T-cell (primary cell): ENCODE measurements at regions of chr6 and their contacts with region 1.

Region 1: DNA sequence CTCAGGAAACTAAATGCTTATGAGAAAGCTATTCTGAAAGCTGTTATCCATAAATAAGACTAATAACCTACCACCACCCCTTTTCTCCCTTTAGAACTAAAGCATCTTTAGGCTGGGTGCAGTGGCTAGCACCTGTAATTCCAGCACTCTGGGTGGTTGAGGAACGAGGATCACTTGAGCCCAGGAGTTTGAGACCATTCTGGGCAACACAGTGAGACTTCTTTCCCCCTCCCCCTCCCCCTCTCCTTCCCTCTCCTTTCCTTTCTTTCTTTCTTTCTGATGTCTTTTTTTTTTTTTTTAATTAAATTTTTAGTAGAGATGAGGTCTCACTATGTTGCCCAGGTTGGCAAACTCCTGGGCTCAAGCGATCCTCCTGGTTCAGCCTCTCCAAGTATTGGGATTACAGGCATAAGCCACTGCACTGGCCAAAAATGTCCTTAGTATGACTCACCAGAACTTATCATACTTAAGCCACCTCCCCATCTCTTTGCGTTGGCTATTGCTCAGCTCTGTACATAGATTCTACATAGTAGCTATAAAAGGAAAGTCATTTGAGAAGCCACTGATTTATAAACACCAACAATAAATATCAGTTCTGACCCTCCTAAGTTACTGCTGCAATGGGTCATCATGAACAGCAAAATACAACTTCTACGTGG is 54.8 kb upstream of the SPDEF start:
- DNase-seq: no peak
- ATAC-seq: no peak
- H3K4me3 ChIP-seq: no peak overlapping the region
- H3K4me3 Mint-ChIP-seq: no peak overlapping the region
- H3K27ac ChIP-seq: no peak overlapping the region
- H3K27ac Mint-ChIP-seq: peak overlapping the region in 1 of 2 donors; percentile 18
- H3K4me1 ChIP-seq: no peaks in the 10 kb centered on the region
- H3K4me1 Mint-ChIP-seq: peaks cover 12 to 22% (median 15%) of the 10 kb centered on the region in 3 donors
- H3K27me3 ChIP-seq: no peaks in the 10 kb centered on the region
- H3K27me3 Mint-ChIP-seq: no peaks in the 10 kb centered on the region

Region 2: DNA sequence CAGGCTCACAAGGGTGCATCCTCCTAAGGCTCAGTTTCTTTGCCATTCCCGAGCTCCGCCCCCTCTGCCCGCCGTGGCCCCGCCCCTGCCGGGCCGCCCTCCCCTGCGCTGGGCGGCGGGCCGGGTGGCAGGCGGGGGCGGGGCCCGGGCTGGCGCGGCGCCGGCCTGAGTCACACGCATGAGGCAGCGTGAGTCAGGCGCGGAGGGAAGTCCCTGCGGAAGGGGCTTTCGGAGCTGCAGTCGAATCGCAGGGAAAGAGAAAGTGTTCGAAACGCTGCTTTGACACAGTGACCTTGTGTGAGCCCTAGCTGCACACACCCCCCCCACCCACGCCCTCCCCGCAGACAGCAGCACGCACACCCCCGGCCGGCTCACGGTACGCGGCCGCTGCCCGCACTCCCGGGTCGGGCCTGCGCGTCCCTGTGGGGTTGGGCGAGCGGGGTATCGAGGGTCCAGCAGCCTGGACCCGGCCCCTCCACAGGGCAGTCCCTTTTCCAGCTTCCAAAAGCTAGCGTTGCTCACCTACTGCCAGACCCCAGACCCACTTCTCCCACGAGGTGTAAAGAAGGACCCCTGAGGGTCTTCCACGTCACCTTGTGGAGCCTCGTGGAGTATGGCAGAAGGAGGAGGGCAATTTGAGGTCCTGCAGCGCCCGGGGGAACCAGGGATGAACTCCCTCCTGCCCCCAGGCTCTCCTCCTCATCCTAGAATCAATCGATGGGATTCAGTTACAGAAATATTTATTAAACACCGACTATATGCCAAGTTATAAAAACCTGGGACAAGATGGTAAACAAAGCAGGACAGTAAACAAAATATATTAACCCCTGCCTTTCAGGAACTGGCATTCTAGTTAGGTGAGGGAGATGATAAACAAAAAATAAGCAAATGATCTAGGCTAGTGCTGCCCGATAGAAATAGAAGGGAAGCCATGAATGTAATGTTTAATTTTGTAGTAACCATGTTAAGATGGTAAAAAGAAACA is 386.7 kb before region 1 on chr6:
- CTCF ChIA-PET with region 1: no interaction called
- POLR2A ChIA-PET with region 1: no interaction called
- DNase-seq: peak; percentile 85 to 98 (median 92)
- ATAC-seq: peak; percentile 95 to 99 (median 99)
- H3K4me3 ChIP-seq: peak overlapping the region; percentile 61 to 69
- H3K4me3 Mint-ChIP-seq: peak overlapping the region; percentile 60 to 73 (median 64)
- H3K27ac ChIP-seq: peak overlapping the region; percentile 99
- H3K27ac Mint-ChIP-seq: peak overlapping the region; percentile 91
- H3K4me1 ChIP-seq: peaks cover 6 to 13% of the 10 kb centered on the region in 2 experiments
- H3K4me1 Mint-ChIP-seq: peaks cover 6 to 25% (median 17%) of the 10 kb centered on the region in 3 donors
- H3K27me3 ChIP-seq: no peaks in the 10 kb centered on the region
- H3K27me3 Mint-ChIP-seq: no peaks in the 10 kb centered on the region

Region 3: GRCh38 chr6:34248727-34249551 is 362.0 kb before region 1 on chr6 and contains the start of gene SMIM29:
- CTCF ChIA-PET with region 1: interaction called in 1 of 2 experiments, 10 read pairs
- POLR2A ChIA-PET with region 1: no interaction called
- DNase-seq: peak; percentile 92 to 99 (median 97)
- ATAC-seq: peak; percentile 89 to 95 (median 90)
- H3K4me3 ChIP-seq: peak within 1 kb of the TSS; percentile 87 to 90
- H3K4me3 Mint-ChIP-seq: peak within 1 kb of the TSS; percentile 85 to 95 (median 90)
- H3K27ac ChIP-seq: peak within 1 kb of the TSS; percentile 90
- H3K27ac Mint-ChIP-seq: peak within 1 kb of the TSS; percentile 94 to 95
- H3K4me1 ChIP-seq: peaks cover 8 to 41% of the 10 kb centered on the region in 2 experiments
- H3K4me1 Mint-ChIP-seq: peaks cover 27 to 49% (median 40%) of the 10 kb centered on the region in 3 donors
- H3K27me3 ChIP-seq: no peaks in the 10 kb centered on the region
- H3K27me3 Mint-ChIP-seq: no peaks in the 10 kb centered on the region
- total RNA-seq, gene SMIM29: 16.4 to 33.8 (median 30.5) TPM

Region 4: DNA sequence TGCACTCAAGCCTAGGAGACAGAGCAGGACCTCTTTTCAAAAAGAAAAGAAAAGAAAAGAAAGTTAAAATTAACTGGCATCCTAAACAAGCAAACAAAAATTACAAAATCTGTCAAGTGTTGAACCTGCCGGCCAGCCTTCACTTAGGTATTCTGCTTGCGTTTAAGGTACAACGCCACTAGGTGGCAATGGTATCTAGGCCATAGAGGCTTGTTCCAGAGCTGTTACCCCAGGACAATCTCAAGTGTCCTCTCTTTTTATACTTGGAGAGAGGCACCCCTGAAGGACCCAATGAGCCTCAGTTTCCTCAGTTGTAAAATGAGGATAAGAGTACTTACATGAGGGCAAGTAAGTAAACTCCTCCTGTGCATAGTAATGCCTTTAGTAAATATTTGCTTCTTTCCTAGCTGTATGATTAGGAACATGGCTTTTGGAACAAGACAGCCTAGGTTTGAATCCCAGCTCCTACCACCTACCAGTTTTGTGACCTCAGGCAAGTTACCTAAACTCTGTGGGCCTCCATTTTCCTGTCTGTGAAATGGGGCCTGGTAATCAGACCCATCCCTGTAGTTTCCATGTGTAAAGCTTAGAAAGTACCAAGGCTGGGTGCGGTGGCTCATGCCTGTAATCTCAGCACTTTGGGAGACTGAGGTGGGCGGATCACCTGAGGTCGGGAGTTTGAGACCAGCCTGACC is 150.9 kb before region 1 on chr6:
- CTCF ChIA-PET with region 1: interaction called, 22 to 71 read pairs
- POLR2A ChIA-PET with region 1: no interaction called
- DNase-seq: peak in 33 of 35 experiments; percentile 6 to 75 (median 32)
- ATAC-seq: peak; percentile 63 to 81 (median 72)
- H3K4me3 ChIP-seq: no peak overlapping the region
- H3K4me3 Mint-ChIP-seq: no peak overlapping the region
- H3K27ac ChIP-seq: no peak overlapping the region
- H3K27ac Mint-ChIP-seq: no peak overlapping the region
- H3K4me1 ChIP-seq: no peaks in the 10 kb centered on the region
- H3K4me1 Mint-ChIP-seq: peaks cover 0 to 1% (median 1%) of the 10 kb centered on the region in 3 donors
- H3K27me3 ChIP-seq: peaks cover 4 to 23% of the 10 kb centered on the region in 2 experiments
- H3K27me3 Mint-ChIP-seq: peaks cover 8 to 13% of the 10 kb centered on the region in 2 donors

Region 5: DNA sequence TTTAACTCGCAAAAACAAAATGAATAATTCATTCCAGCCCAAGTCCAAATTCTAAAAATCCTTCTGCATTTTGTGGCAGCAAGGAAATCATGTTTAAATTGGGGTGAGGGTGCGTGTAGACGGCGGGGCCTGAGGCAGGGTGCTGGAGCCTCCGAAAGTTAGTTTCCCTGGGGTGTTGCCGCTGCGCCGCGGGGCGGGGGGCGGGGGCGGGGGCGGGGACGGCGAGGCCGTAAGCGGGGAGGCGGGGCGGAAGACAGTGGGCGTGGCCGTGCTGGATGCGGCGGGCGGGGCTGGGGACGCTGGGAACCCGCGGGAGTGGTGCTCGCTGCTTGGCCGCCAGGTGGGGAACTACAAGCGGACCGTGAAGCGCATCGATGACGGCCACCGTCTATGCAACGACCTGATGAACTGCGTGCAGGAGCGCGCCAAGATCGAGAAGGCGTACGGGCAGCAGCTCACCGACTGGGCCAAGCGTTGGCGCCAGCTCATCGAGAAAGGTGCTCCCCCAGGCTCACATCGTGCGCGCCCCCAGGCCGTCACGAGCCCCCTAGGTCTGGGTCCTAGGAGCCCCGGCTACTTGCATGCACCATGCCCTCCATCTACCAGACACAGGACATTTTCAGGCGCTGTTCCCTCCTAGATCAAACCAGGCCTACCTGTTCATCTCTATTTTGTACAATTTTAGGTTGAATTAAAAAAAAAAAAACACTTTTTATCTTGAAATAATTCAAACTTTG is 83.8 kb before region 1 on chr6:
- CTCF ChIA-PET with region 1: interaction called in 1 of 2 experiments, 11 read pairs
- POLR2A ChIA-PET with region 1: no interaction called
- DNase-seq: peak; percentile 86 to 98 (median 95)
- ATAC-seq: peak; percentile 89 to 98 (median 97)
- H3K4me3 ChIP-seq: peak overlapping the region in 1 of 2 donors; percentile 15
- H3K4me3 Mint-ChIP-seq: peak overlapping the region; percentile 28 to 48 (median 43)
- H3K27ac ChIP-seq: peak overlapping the region; percentile 31
- H3K27ac Mint-ChIP-seq: peak overlapping the region; percentile 46 to 68
- H3K4me1 ChIP-seq: peaks cover 0 to 13% of the 10 kb centered on the region in 2 experiments
- H3K4me1 Mint-ChIP-seq: peaks cover 0 to 10% (median 7%) of the 10 kb centered on the region in 3 donors
- H3K27me3 ChIP-seq: no peaks in the 10 kb centered on the region
- H3K27me3 Mint-ChIP-seq: peaks cover 0 to 2% of the 10 kb centered on the region in 2 donors

Region 6: GRCh38 chr6:34922177-34922663 is 311.3 kb after region 1 on chr6:
- CTCF ChIA-PET with region 1: no interaction called
- POLR2A ChIA-PET with region 1: no interaction called
- DNase-seq: no peak
- ATAC-seq: peak in 1 of 4 experiments; percentile 41
- H3K4me3 ChIP-seq: no peak overlapping the region
- H3K4me3 Mint-ChIP-seq: no peak overlapping the region
- H3K27ac ChIP-seq: no peak overlapping the region
- H3K27ac Mint-ChIP-seq: no peak overlapping the region
- H3K4me1 ChIP-seq: no peaks in the 10 kb centered on the region
- H3K4me1 Mint-ChIP-seq: peaks cover 4 to 11% (median 10%) of the 10 kb centered on the region in 3 donors
- H3K27me3 ChIP-seq: no peaks in the 10 kb centered on the region
- H3K27me3 Mint-ChIP-seq: no peaks in the 10 kb centered on the region

Region 7: GRCh38 chr6:34964564-34964963 is 353.6 kb after region 1 on chr6:
- CTCF ChIA-PET with region 1: no interaction called
- POLR2A ChIA-PET with region 1: no interaction called
- DNase-seq: no peak
- ATAC-seq: no peak
- H3K4me3 ChIP-seq: no peak overlapping the region
- H3K4me3 Mint-ChIP-seq: no peak overlapping the region
- H3K27ac ChIP-seq: no peak overlapping the region
- H3K27ac Mint-ChIP-seq: no peak overlapping the region
- H3K4me1 ChIP-seq: peaks cover 3 to 19% of the 10 kb centered on the region in 2 experiments
- H3K4me1 Mint-ChIP-seq: peaks cover 6 to 13% (median 11%) of the 10 kb centered on the region in 3 donors
- H3K27me3 ChIP-seq: no peaks in the 10 kb centered on the region
- H3K27me3 Mint-ChIP-seq: no peaks in the 10 kb centered on the region